Mucosa of descending colon (tissue), 3 donors: ENCODE measurements at regions of chr7 and their contacts with region 1.

Region 1: DNA sequence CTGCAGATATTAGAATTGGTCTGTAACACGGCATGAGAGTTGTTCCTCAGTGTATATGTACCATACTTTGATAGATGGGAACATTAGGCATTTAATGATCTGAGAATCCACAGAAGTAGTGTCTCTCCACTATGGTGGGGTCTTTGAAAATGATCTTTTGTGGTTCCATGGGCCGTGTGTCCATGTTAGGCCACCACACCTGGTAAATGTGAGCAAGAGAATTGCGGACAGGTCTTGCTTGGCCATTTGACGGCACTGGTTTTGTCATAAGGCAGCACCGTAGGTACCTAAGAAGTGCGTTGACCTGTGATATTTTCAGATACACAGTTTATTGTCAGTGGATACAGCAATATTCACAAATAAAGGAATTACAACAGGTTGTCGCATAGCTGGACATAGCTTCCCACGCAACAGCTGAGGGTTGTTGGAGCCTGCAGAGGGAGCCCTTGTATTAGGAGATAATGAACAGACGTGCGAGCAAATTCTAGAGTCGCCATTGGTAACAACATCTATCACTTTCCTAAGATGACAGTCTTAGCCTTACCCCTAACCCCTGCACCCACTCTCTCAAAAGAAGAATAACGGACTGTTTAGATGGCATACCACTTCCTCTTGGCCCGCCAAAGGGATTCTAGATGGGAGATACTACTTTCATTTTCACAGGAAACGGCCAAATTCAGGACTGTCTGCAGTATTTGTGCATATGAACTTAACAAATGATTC is 111.4 kb downstream of the COL28A1 start:
- DNase-seq: peak in 2 of 3 donors; percentile 59 to 86
- ATAC-seq: peak; percentile 96
- H3K4me3 ChIP-seq: no peak overlapping the region
- H3K4me1 ChIP-seq: no peaks in the 10 kb centered on the region
- CTCF ChIP-seq: peak; percentile 50

Region 2: GRCh38 chr7:7542251-7542835 is 118.0 kb after region 1 on chr7:
- intact Hi-C with region 1: loop called in 1 of 2 experiments (anchors 5 kb)
- DNase-seq: no peak
- ATAC-seq: no peak
- H3K4me3 ChIP-seq: no peak overlapping the region
- H3K4me1 ChIP-seq: no peaks in the 10 kb centered on the region
- CTCF ChIP-seq: no peak

Region 3: GRCh38 chr7:8226501-8226900 is 802.2 kb after region 1 on chr7:
- intact Hi-C with region 1: loop called in 1 of 2 experiments (anchors 10 kb)
- DNase-seq: no peak
- ATAC-seq: no peak
- H3K4me3 ChIP-seq: no peak overlapping the region
- H3K4me1 ChIP-seq: no peaks in the 10 kb centered on the region
- CTCF ChIP-seq: no peak